ENCODE measurements at regions of chr6 and their contacts with region 1.

Region 1: GRCh38 chr6:37538107-37538506 is 38.4 kb upstream of the CCDC167 start:
- DNase-seq: peak; percentile 69
- CTCF ChIP-seq: peak; percentile 77

Region 2: DNA sequence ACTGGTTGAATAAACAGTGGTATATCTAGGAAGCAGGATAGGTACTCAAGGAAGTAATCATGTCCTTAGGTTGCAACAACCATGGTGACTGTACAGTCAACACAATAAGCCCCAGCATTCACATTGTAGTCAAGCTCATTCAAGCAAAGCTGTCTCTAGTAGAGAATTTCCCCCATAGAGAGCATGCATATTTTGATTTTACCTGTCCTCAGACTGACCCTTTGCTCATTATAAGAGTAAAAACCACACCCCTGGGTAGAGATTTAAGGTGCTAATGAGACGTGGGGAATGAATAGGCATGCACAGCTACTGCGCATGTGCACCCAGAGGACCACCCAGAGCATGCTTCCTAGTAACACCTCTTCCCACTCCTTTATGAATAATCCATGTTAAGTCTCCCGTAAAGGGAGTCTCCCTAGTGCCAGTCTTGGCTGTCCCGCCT is 190.4 kb before region 1 on chr6:
- CTCF ChIA-PET with region 1: no interaction called
- POLR2A ChIA-PET with region 1: no interaction called
- DNase-seq: no peak
- CTCF ChIP-seq: no peak

Region 3: DNA sequence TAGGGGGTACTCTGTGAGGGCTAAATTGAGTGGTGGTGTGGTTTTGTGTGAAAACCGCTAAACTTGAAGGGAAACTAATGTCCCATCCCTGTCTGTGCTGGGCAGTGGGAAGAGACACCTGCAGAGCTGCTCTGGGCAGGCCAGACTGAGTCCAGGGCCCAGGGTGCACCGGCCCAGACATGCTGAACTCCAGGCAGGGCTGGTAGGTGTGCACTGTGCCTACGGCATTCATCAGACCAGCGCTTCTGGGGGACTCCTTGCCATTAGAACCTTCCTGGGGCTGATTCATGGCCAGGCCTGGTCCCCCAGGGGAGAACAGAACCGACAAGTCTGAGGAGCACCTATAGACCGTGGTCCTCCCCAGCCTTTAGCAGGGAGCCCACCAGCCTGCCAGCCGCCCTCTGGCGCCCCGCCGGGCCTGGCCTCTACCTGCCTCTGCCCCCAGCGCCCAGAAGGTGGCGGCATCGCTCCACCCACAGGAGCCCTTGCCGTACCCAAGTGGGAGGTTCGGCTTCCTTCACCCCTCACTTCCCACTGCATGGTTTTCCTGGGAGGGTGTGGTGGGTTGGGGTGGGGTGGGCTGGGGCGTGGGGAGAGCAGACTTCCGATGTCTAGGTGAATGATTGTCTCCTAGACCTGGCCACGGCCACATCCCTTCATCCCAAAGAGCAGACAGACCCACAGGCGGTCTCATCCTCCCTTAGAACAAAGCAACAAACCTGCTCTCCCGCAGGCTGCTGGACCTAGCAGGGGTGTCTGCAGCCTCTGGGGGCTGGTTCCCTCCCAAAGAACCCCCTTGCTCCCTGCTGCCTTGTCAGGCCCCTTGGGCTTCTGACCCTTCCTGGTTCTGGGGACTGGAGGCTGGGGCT is 54.0 kb before region 1 on chr6:
- CTCF ChIA-PET with region 1: interaction called, 20 read pairs
- POLR2A ChIA-PET with region 1: no interaction called
- DNase-seq: peak; percentile 88
- CTCF ChIP-seq: peak; percentile 93

Region 4: DNA sequence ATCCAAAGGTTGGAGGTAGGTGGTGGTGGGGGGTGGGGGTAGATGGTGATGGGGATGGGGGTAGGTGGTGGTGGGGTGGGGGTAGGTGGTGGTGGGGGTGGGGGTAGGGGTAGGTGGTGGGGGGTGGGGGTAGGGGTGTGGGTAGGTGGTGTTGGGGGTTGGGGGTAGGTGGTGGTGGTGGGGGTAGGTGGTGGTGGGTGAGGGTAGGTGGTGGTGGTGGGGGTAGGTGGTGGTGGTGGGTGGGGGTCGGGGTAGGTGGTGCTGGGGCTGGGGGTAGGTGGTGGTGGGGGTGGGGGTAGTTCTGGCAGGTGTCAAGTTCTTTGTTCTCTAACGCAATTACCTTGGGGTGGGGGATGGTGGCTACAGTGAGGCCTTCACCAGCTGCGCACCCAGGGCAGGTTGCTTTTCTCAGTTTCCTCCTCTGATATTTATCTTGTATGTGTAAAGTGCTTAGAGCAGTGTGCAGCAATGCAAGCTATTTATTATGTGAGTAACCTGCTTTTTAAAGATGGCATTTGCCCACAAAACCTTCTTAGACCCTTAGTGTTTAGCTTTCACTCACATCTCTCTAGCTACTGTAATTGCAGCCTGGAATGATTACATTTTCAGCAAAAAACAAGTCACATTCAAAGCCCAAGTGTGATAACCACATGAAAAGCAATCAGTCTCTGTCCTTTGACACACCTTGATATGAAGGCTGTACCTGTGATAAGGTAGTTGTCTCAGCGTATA is 30.3 kb before region 1 on chr6:
- CTCF ChIA-PET with region 1: interaction called, 13 read pairs
- POLR2A ChIA-PET with region 1: no interaction called
- DNase-seq: no peak
- CTCF ChIP-seq: no peak

Region 5: DNA sequence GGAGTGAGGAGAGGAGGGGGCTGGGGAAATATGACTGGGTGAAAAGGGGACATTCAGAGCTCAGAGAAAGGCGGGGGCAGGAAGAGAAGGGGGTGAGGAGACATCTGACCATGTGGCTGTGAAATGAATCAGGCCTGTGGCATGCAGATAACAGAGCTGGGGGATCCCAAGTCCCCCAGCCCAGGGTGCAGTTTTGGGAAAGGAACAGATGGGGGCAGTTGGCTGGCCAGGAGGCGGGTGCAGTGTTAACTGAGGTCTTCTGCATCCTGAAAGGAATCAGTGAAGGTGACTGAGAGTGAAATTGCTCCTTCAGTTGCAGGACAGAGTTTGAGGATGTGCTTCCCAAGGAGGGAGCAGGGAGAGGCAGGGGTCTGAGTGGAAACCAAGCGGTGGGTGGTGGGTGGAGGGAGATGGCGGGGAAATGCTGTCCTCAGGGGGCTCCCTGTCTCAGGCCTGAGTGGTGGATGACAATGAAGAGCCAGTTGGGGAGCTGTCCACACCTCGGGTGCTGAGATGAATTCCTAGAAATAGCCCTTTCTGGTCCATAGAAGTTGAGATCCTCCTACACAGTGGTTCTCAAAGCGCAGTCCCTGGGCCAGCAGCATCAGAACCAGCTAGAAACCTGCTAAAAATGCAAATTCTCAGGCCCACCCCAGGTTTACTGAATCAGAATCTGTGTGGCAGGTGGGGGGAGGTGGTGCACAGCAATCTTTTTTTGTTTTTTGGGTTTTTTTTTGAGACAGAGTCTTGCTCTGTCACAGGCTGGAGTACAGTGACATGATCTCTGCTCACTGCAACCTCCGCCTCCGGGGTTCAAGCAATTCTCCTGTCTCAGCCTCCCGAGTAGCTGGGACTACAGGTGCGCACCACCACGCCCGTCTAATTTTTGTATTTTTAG is 12.4 kb before region 1 on chr6:
- CTCF ChIA-PET with region 1: interaction called, 35 read pairs
- POLR2A ChIA-PET with region 1: no interaction called
- DNase-seq: peak; percentile 53
- CTCF ChIP-seq: no peak

Region 6: GRCh38 chr6:37624986-37625574 is 87.0 kb after region 1 on chr6:
- CTCF ChIA-PET with region 1: no interaction called
- POLR2A ChIA-PET with region 1: no interaction called
- DNase-seq: no peak
- CTCF ChIP-seq: no peak

Region 7: GRCh38 chr6:37679539-37680476 is 141.7 kb after region 1 on chr6:
- CTCF ChIA-PET with region 1: interaction called, 12 read pairs
- POLR2A ChIA-PET with region 1: no interaction called
- DNase-seq: peak; percentile 90
- CTCF ChIP-seq: no peak

Measured in GM10248 (cell line).